Aorta (tissue), 5 donors: ENCODE measurements at regions of chr9 and their contacts with region 1.

Region 1: GRCh38 chr9:105157130-105157583 is 87.3 kb upstream of the SLC44A1 start:
- DNase-seq: peak in 1 of 2 donors; percentile 75
- ATAC-seq: peak; percentile 90
- H3K4me3 ChIP-seq: no peak overlapping the region
- H3K27ac ChIP-seq: peak overlapping the region in 1 of 2 donors; percentile 13
- H3K4me1 ChIP-seq: no peaks in the 10 kb centered on the region
- H3K27me3 ChIP-seq: no peaks in the 10 kb centered on the region

Region 2: DNA sequence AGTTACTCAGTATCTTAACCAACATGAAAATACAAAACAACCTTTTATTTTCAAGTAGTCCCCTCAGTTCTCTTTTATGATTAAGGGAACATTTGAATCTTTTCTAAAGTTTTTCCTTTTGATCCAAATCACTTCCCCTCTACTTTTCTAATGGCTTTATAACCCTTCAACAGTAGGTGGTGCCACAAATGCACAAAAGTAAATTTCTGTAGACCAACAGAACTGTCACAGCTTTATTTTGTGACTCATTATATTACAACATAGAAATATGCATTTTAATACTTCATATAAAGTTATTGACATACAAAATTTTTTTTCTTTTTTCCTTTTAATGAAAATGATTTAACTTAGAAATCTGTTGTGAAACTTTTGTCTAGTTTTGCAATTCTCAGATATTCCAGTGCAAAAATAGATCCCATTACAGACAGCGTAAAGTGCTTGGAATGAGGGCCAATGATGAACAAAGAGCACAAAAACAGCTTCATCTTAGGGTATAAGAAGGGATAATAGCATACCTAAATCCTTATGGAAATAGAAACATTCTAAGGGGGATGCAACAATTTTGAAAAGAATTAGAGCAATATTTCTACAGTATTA is 376.3 kb before region 1 on chr9:
- intact Hi-C with region 1: loop called in 1 of 2 experiments (anchors 10 kb)
- DNase-seq: no peak
- ATAC-seq: no peak
- H3K4me3 ChIP-seq: no peak overlapping the region
- H3K27ac ChIP-seq: no peak overlapping the region
- H3K4me1 ChIP-seq: peaks cover 0 to 6% of the 10 kb centered on the region in 2 donors
- H3K27me3 ChIP-seq: no peaks in the 10 kb centered on the region

Region 3: GRCh38 chr9:104863180-104863883 is 293.8 kb before region 1 on chr9:
- intact Hi-C with region 1: loop called (anchors 5 kb)
- DNase-seq: no peak
- ATAC-seq: peak; percentile 44
- H3K4me3 ChIP-seq: no peak overlapping the region
- H3K27ac ChIP-seq: no peak overlapping the region
- H3K4me1 ChIP-seq: peaks cover 0 to 4% of the 10 kb centered on the region in 2 donors
- H3K27me3 ChIP-seq: no peaks in the 10 kb centered on the region

Region 4: GRCh38 chr9:104927912-104928740 is 229.0 kb before region 1 on chr9 and contains the start of gene ABCA1:
- intact Hi-C with region 1: loop called (anchors 5 kb)
- DNase-seq: peak; percentile 96 to 97
- ATAC-seq: peak; percentile 94
- H3K4me3 ChIP-seq: peak within 1 kb of the TSS; percentile 85 to 87
- H3K27ac ChIP-seq: peak within 1 kb of the TSS; percentile 45 to 85
- H3K4me1 ChIP-seq: no peaks in the 10 kb centered on the region
- H3K27me3 ChIP-seq: no peaks in the 10 kb centered on the region
- total RNA-seq, gene ABCA1: 26.3 to 44.7 TPM

Region 5: DNA sequence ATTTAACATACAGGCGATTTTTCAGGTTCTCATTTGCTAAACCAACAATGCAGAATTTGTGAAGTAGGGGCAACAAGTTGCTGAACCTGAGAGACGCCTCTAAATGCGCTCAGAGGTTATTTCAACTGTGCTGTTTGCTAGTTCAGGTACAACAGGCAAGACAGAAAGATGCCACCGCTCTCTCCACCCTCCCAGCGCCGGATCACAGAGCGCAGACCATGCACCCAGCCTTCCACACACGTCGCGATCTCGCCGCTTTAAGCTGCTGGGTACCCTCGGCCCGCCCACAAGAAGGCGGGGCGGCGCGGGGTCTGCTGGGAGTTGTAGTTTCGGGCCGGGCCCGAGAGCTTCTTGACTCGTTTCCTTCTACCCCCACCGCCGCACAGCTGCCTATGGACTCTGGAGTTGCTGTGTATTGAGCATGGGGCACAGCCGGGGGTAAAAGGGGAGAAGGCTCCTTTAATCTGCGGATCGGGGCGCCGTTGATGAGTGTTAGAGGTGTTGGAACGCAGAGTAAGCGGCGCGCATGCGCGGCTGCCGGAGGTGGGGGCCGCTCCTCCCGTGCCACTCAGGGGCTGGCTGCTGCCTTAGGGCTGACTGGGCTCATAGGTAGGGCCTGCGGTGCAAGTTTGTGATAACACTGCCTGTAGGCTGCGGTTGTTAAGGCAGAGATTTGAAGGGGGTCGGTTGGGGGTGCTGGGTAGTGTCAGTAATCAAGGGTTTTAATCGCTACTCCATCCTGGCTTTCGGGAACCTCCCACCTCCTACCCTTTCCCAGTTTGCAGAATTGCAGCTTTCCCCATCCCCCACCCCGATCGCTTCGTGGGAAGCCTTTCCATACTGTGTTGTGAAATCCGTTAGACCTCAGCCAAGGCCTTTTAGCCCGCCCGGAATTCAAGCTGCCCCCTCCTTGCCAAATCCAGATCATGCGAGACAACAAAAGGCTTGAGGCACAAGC is 188.9 kb before region 1 on chr9:
- intact Hi-C with region 1: loop called in 1 of 2 experiments (anchors 2 kb)
- DNase-seq: peak; percentile 92 to 96
- ATAC-seq: peak; percentile 97
- H3K4me3 ChIP-seq: peak overlapping the region; percentile 43 to 75
- H3K27ac ChIP-seq: peak overlapping the region in 1 of 2 donors; percentile 60
- H3K4me1 ChIP-seq: no peaks in the 10 kb centered on the region
- H3K27me3 ChIP-seq: no peaks in the 10 kb centered on the region

Region 6: GRCh38 chr9:104991144-104991953 is 165.8 kb before region 1 on chr9:
- intact Hi-C with region 1: loop called in 1 of 2 experiments (anchors 10 kb)
- DNase-seq: peak; percentile 95 to 96
- ATAC-seq: peak; percentile 95
- H3K4me3 ChIP-seq: peak overlapping the region; percentile 44 to 88
- H3K27ac ChIP-seq: peak overlapping the region; percentile 83 to 87
- H3K4me1 ChIP-seq: peaks cover 0 to 10% of the 10 kb centered on the region in 2 donors
- H3K27me3 ChIP-seq: no peaks in the 10 kb centered on the region

Region 7: DNA sequence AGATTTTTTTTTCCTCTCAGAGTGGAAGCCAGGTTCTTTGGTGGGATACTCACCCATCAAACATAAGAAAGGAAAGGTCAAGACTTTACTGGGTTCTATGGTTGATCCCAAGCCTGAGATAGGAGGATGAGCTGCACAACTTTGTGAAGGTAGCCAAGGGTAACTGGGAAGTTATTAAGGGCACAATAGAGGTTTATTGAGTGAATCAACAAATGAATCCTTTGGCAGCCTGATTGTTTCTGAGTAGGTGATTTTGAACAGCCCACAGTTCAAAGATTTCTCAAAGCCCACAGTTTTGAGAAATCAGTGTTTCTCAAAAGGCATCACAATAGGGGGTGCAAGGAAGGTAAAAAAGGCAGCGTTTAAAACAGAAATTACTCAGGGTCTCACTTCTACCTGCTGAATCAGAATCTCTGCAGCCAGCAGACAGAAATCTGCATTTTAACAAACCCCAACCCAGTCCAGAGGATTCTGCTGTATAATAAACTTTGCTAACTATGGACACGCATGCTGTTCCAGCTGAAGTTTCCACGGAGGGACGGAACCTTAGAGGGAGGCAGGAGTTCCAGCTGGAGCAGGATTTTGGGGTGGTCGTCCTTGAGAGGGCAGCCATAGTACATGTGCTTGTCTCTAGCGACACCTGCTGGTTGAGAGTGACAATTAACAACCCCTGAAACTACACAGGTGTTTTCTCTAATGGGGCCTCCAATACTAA is 257.9 kb after region 1 on chr9:
- intact Hi-C with region 1: loop called (anchors 10 kb)
- DNase-seq: no peak
- ATAC-seq: peak; percentile 85
- H3K4me3 ChIP-seq: no peak overlapping the region
- H3K27ac ChIP-seq: no peak overlapping the region
- H3K4me1 ChIP-seq: peaks cover 0 to 2% of the 10 kb centered on the region in 2 donors
- H3K27me3 ChIP-seq: no peaks in the 10 kb centered on the region